Activated B cell treated with CpG ODN at 0.5 μM for 24 hours (primary cell): ENCODE measurements at regions of chr15 and their contacts with region 1.

Region 1: DNA sequence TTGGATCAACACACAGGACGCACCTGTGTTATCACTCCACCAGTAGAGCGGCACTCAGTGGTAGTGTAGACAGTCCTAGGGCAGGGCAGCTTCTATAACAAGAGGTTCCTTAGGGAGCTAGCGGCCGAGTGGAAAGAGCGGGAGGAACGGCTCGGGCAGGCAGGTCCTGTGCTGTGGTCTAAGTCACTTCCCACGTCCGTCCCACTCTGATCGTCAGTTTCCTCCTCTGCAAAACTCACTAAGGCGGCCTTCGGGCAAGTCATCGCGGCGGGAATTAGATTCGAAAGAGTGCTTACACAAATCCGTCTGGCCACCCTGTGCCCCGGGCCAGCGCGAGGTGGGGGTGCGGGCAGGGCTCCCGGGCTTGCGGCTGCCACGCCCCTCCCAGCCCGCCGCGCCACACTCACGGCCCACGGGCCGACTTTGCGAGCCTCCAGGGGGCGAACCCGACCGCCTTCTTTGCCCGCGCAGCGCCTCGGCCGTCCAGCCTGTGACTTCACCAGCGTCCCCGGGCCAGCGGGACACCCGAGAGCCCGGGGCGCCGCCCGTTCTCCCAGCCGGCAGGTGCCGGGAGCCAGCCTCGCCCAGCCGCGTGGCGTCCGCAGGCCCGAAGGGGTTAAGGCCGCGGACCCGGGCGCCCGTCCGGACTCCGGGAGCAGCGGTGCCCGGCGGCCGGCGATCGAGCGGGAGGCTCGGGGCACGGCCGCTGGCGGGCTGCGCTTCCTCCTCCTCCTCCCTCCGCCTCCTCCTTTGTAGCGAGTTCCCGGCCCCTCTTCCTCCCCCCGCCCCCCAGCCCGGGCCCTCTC is 416 bp upstream of the CORO2B start:
- DNase-seq: peak; percentile 57
- ATAC-seq: peak; percentile 69
- H3K4me3 Mint-ChIP-seq: peak overlapping the region; percentile 83
- H3K27ac Mint-ChIP-seq: peak overlapping the region; percentile 71
- H3K4me1 Mint-ChIP-seq: peaks cover 38% of the 10 kb centered on the region
- H3K27me3 Mint-ChIP-seq: peaks cover 17% of the 10 kb centered on the region
- CTCF ChIP-seq: no peak

Region 2: DNA sequence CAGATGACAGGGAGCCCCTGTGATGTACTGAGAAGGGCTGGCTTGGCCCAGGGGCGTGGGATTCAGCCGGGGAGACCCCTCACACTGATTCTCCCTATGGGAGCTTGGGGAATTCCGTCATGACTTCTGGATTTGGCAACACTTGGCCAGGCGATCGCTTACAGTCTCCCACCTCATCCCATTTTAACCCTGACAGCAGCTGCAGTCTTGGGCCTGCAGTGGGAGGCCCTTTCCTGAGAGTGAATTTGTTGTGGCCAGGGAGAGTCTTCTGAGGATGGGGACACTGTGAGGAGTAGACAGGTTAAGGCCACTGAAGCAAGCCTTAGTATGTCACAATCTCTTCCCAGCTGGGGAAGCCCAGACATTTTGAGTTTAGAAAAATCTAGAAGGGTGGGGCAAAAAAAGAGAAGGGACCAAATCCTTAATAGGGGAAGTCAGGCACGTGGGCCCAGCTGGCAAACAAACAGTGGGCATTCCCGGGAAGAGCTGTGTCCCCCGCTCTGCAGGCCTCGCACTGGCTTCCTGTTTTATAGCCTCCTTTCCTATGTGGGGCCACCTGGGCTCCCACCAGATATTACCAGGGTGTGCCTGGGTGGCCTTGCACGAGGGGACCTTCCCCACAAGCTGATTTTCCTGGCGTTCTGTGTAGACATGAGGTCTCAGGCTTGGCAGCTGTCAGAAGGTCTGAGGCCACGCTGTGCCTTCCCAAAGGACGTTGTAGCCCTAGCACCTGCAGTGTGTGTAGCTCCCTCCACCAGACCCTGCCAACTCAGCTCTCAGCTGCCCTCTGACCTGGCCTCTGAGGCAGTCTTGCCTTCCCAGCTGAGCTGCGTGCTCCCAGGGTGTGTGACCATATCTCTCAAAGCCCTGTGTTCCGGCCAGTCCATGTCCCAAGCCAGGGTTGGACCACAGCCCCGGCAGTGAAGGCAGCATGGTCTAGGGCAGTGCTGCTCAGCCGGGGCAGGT is 236.3 kb before region 1 on chr15:
- CTCF ChIA-PET with region 1: no interaction called
- POLR2A ChIA-PET with region 1: no interaction called
- intact Hi-C with region 1: no loop called
- DNase-seq: no peak
- ATAC-seq: no peak
- H3K4me3 Mint-ChIP-seq: no peak overlapping the region
- H3K27ac Mint-ChIP-seq: no peak overlapping the region
- H3K4me1 Mint-ChIP-seq: no peaks in the 10 kb centered on the region
- H3K27me3 Mint-ChIP-seq: no peaks in the 10 kb centered on the region
- CTCF ChIP-seq: no peak

Region 3: GRCh38 chr15:68413363-68414205 is 164.8 kb before region 1 on chr15:
- CTCF ChIA-PET with region 1: no interaction called
- POLR2A ChIA-PET with region 1: no interaction called
- intact Hi-C with region 1: no loop called
- DNase-seq: no peak
- ATAC-seq: no peak
- H3K4me3 Mint-ChIP-seq: no peak overlapping the region
- H3K27ac Mint-ChIP-seq: no peak overlapping the region
- H3K4me1 Mint-ChIP-seq: no peaks in the 10 kb centered on the region
- H3K27me3 Mint-ChIP-seq: no peaks in the 10 kb centered on the region
- CTCF ChIP-seq: no peak

Region 4: GRCh38 chr15:68503791-68504680 is 74.3 kb before region 1 on chr15:
- CTCF ChIA-PET with region 1: no interaction called
- POLR2A ChIA-PET with region 1: no interaction called
- intact Hi-C with region 1: no loop called
- DNase-seq: no peak
- ATAC-seq: no peak
- H3K4me3 Mint-ChIP-seq: no peak overlapping the region
- H3K27ac Mint-ChIP-seq: no peak overlapping the region
- H3K4me1 Mint-ChIP-seq: no peaks in the 10 kb centered on the region
- H3K27me3 Mint-ChIP-seq: peaks cover 16% of the 10 kb centered on the region
- CTCF ChIP-seq: no peak

Region 5: DNA sequence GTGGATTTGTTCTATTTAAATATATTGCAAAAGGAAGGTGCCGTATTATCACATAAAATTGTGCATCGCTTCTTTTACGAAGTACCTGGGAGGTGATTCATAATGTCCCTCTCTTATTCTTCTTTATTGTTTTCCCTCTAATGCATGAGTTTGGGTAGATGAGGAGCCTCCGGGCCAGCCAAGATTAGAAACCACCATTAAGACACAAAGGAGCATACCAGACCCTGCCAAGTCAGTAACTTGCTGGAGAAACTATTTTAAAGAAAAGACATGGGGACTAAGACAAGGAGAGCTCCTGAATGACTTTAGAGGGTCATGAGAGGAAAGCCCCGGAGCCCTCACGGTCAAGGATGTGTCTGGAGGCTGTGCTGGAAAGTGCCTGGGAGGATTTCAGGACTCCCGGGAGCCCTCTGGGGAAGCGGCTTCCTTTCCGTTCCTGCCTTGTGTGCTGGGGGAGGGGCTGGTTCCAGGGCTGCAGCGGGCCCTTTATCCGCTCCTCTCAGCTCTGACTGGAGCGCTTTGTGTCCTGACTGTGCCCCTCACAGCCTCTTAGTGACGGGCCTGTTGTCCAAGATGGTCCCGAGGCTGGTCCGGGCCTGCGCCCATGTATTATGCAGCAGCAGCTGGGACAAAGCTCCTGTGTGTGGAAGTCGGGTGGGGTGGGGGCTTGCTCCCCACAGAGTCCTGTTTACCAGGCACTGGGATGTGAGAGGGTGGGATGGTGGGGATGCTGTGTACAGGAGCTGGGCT is 36.1 kb after region 1 on chr15:
- CTCF ChIA-PET with region 1: no interaction called
- POLR2A ChIA-PET with region 1: no interaction called
- intact Hi-C with region 1: loop called (anchors 5 kb)
- DNase-seq: no peak
- ATAC-seq: no peak
- H3K4me3 Mint-ChIP-seq: no peak overlapping the region
- H3K27ac Mint-ChIP-seq: no peak overlapping the region
- H3K4me1 Mint-ChIP-seq: peaks cover 19% of the 10 kb centered on the region
- H3K27me3 Mint-ChIP-seq: no peaks in the 10 kb centered on the region
- CTCF ChIP-seq: no peak

Region 6: DNA sequence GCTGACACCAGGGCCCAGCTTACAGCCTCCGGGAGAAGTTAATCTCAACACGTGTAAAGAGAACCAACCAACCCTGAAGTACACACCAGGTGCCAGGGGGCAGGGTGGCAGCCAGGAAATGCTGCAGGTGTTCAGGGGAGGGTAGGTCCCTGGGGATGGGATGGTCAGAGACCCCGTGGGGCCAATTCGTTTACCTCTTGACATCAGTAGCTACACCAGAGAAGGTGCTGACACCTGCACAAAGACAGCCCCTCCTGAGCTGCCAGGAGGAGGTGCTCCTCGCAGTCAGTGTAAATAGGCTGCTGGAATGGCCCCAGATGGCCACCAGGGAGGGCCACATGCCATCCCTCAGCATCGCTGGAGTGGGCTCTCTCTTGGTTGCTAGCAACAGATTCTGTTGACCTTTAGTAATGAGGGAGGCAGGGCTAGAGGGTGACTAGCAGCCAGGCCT is 53.2 kb after region 1 on chr15:
- CTCF ChIA-PET with region 1: no interaction called
- POLR2A ChIA-PET with region 1: interaction called, 8 read pairs
- intact Hi-C with region 1: loop called (anchors 2 kb)
- DNase-seq: peak; percentile 37
- ATAC-seq: peak; percentile 77
- H3K4me3 Mint-ChIP-seq: peak overlapping the region; percentile 60
- H3K27ac Mint-ChIP-seq: peak overlapping the region; percentile 77
- H3K4me1 Mint-ChIP-seq: peaks cover 98% of the 10 kb centered on the region
- H3K27me3 Mint-ChIP-seq: no peaks in the 10 kb centered on the region
- CTCF ChIP-seq: no peak